Esophagus squamous epithelium (tissue), 5 donors: ENCODE measurements at regions of chr11 and their contacts with region 1.

Region 1: GRCh38 chr11:87352759-87353707 is 315.3 kb downstream of the TMEM135 start:
- DNase-seq: no peak
- H3K4me3 ChIP-seq: peak overlapping the region in 1 of 4 donors; percentile 40
- H3K27ac ChIP-seq: peak overlapping the region in 2 of 4 donors; percentile 6 to 18
- H3K4me1 ChIP-seq: peaks cover 0 to 35% (median 12%) of the 10 kb centered on the region in 3 donors
- H3K27me3 ChIP-seq: no peaks in the 10 kb centered on the region
- CTCF ChIP-seq: peak; percentile 93 to 100 (median 98)
- POLR2A ChIP-seq: no peak

Region 2: DNA sequence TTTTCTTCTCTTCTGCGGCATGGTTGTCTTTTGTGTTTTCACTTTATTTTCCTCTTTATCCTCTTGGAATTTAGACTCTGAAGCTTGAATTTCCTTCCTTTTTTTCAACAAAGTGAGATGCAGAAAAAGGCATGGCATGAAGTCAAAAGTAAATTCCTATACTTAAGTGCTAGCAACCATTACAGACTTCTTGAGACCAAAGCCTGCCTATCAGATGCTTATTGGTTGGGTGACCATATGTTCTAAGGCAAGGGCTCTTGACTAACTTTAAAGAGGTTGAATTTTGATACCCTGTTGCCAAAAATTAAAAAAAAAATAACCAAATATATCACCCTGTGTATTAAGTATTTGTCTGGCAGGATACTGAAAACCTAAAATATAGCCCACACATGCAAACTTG is 77.9 kb before region 1 on chr11:
- intact Hi-C with region 1: no loop called
- DNase-seq: no peak
- H3K4me3 ChIP-seq: no peak overlapping the region
- H3K27ac ChIP-seq: no peak overlapping the region
- H3K4me1 ChIP-seq: no peaks in the 10 kb centered on the region
- H3K27me3 ChIP-seq: no peaks in the 10 kb centered on the region
- CTCF ChIP-seq: no peak
- POLR2A ChIP-seq: no peak

Region 3: DNA sequence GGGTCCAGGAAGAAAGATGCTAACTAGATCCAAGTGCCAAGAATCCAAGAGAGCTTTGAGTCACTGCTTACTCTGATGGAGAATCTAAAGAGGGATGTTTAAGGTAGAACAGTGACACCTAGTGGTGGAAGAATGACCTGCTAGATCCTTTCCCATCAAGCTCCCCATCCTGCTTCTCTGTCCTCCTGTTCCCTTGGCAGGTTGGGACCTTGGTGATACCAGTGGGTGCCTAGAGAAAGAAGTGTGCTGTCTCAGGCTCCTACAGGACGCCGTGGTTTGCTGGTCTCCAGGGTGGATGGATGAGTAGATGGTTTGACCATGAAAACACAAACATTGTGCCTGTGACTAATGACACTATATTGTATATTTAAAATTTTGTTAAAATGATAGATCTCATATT is 68.4 kb after region 1 on chr11:
- intact Hi-C with region 1: loop called (anchors 5 kb)
- DNase-seq: no peak
- H3K4me3 ChIP-seq: no peak overlapping the region
- H3K27ac ChIP-seq: no peak overlapping the region
- H3K4me1 ChIP-seq: no peaks in the 10 kb centered on the region
- H3K27me3 ChIP-seq: no peaks in the 10 kb centered on the region
- CTCF ChIP-seq: peak; percentile 54 to 78 (median 69)
- POLR2A ChIP-seq: no peak